Activated CD8-positive, alpha-beta T cell treated with anti-CD3 and anti-CD28 coated beads for 36 hours (primary cell): ENCODE measurements at regions of chr3 and their contacts with region 1.

Region 1: DNA sequence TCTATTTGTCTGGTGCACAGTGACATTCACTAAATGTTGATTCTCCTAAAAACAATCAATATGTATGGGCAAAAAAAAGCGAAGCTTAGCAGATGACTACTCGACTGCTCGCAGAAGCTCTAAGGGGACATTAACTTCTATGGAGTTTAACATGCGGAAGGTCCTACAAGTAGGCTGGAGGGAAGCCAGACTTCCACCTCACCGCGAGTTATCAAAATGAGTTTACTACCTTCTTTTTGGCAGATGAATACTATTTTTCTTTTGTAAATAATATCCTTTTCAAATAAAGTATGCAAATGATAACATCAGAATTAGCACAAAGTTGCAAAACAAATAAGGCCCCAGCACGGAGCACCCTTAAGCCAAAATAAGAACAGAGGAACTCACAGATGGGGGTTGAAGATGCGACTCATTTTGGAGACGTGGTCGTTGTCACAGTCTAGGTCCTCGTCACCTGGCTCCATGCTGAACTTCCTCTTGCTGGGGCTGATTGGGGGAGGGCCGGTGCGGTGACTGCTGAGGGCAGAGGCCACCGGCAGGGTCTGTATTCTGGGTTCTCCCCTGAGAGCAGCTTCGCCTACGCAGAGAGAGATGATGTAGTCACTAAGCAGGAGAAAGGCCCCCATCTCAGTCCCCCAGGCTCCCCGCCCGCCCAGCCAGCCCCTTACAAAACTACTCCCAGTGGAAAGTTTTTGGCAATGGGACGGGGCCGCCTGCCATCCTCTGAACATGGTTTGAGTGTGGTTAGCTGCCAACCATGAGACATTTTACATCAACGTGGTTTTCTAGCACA is 42.1 kb downstream of the VGLL4 start:
- DNase-seq: peak; percentile 91
- ATAC-seq: peak; percentile 95
- H3K4me3 Mint-ChIP-seq: peak overlapping the region; percentile 57
- H3K27ac Mint-ChIP-seq: peak overlapping the region; percentile 92
- H3K4me1 Mint-ChIP-seq: peaks cover 70% of the 10 kb centered on the region
- H3K27me3 Mint-ChIP-seq: no peaks in the 10 kb centered on the region
- CTCF ChIP-seq: no peak

Region 2: DNA sequence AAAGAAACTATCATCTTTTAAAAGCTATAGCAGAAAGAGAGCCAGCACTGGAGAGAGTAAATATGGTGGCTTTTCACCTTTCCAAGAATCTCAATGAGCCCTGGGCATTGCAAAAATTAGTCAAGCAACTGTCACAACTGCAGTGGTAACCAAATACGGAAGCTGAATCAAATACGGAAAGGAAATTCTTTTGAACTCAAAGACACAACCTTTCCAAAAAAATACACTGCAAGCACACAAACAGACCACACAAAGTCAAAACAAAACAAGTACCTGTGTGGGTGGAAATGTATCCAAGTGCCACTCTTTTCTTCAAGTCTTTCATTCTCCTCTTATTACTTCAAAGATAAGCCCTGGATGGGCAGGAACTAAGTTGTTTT is 24.4 kb after region 1 on chr3:
- CTCF ChIA-PET with region 1: interaction called, 3 read pairs
- POLR2A ChIA-PET with region 1: interaction called, 5 read pairs
- intact Hi-C with region 1: loop called (anchors 2 kb)
- DNase-seq: peak; percentile 52
- ATAC-seq: peak; percentile 51
- H3K4me3 Mint-ChIP-seq: peak overlapping the region; percentile 38
- H3K27ac Mint-ChIP-seq: peak overlapping the region; percentile 84
- H3K4me1 Mint-ChIP-seq: peaks cover 71% of the 10 kb centered on the region
- H3K27me3 Mint-ChIP-seq: no peaks in the 10 kb centered on the region
- CTCF ChIP-seq: no peak

Region 3: DNA sequence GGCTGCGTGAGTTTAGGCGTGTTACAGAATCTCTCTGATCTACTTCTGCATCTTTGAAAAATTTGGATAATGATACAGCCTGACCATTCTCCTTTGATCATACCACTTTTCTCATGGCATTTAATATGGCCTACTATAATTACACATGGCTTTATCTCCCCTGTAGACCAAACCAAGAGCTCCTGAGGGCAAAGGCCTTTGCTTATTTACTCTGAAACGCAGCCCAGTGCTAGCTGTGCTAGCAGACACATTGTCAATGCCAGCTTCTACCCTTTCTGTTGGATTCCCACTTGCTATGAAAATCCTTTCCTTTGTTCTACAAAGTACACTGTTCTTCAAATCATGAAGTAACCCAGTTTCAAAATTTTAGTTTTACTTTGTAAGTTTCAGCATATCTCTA is 58.6 kb after region 1 on chr3:
- CTCF ChIA-PET with region 1: no interaction called
- POLR2A ChIA-PET with region 1: no interaction called
- intact Hi-C with region 1: no loop called
- DNase-seq: no peak
- ATAC-seq: no peak
- H3K4me3 Mint-ChIP-seq: no peak overlapping the region
- H3K27ac Mint-ChIP-seq: no peak overlapping the region
- H3K4me1 Mint-ChIP-seq: peaks cover 7% of the 10 kb centered on the region
- H3K27me3 Mint-ChIP-seq: no peaks in the 10 kb centered on the region
- CTCF ChIP-seq: no peak